Activated naive CD4-positive, alpha-beta T cell treated with anti-CD3 and anti-CD28 coated beads for 36 hours (primary cell): ENCODE measurements at regions of chr3 and their contacts with region 1.

Region 1: GRCh38 chr3:32296256-32297204 is 58.0 kb downstream of the CMTM8 start:
- DNase-seq: peak; percentile 80
- H3K4me3 Mint-ChIP-seq: peak overlapping the region; percentile 45
- H3K27ac Mint-ChIP-seq: peak overlapping the region; percentile 85
- H3K4me1 Mint-ChIP-seq: peaks cover 24% of the 10 kb centered on the region
- H3K27me3 Mint-ChIP-seq: no peaks in the 10 kb centered on the region

Region 2: GRCh38 chr3:32097768-32098167 is 198.8 kb before region 1 on chr3:
- CTCF ChIA-PET with region 1: no interaction called
- intact Hi-C with region 1: no loop called
- DNase-seq: no peak
- H3K4me3 Mint-ChIP-seq: no peak overlapping the region
- H3K27ac Mint-ChIP-seq: no peak overlapping the region
- H3K4me1 Mint-ChIP-seq: no peaks in the 10 kb centered on the region
- H3K27me3 Mint-ChIP-seq: no peaks in the 10 kb centered on the region

Region 3: GRCh38 chr3:32285891-32286290 is 10.6 kb before region 1 on chr3:
- CTCF ChIA-PET with region 1: interaction called, 11 read pairs
- intact Hi-C with region 1: no loop called
- DNase-seq: peak; percentile 20
- H3K4me3 Mint-ChIP-seq: peak overlapping the region; percentile 11
- H3K27ac Mint-ChIP-seq: peak overlapping the region; percentile 38
- H3K4me1 Mint-ChIP-seq: peaks cover 40% of the 10 kb centered on the region
- H3K27me3 Mint-ChIP-seq: no peaks in the 10 kb centered on the region

Region 4: GRCh38 chr3:32325957-32326356 is 29.4 kb after region 1 on chr3:
- CTCF ChIA-PET with region 1: interaction called, 12 read pairs
- intact Hi-C with region 1: no loop called
- DNase-seq: no peak
- H3K4me3 Mint-ChIP-seq: no peak overlapping the region
- H3K27ac Mint-ChIP-seq: no peak overlapping the region
- H3K4me1 Mint-ChIP-seq: peaks cover 9% of the 10 kb centered on the region
- H3K27me3 Mint-ChIP-seq: no peaks in the 10 kb centered on the region

Region 5: GRCh38 chr3:32401556-32402081 is 105.1 kb after region 1 on chr3:
- CTCF ChIA-PET with region 1: interaction called, 3 read pairs
- intact Hi-C with region 1: loop called (anchors 1 kb)
- DNase-seq: peak; percentile 77
- H3K4me3 Mint-ChIP-seq: peak overlapping the region; percentile 92
- H3K27ac Mint-ChIP-seq: peak overlapping the region; percentile 99
- H3K4me1 Mint-ChIP-seq: peaks cover 74% of the 10 kb centered on the region
- H3K27me3 Mint-ChIP-seq: no peaks in the 10 kb centered on the region

Region 6: DNA sequence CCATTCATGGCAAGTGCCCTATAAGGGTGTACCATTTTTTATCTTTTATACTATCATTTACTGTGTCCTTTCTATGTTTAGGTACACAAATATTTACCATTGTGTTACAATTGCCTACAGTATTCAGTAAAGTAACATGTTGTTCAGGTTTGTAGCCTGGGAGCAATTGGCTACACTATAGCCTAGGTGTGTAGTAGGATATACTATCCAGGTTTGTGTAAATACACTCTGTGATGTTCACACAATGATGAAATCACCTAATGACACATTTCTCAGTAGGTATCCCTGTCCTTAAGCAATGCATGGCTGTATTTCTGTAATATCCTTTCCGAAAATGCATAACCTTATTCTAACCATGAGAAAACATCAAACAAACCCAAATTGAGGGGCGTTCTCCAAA is 370.6 kb after region 1 on chr3:
- CTCF ChIA-PET with region 1: no interaction called
- intact Hi-C with region 1: loop called (anchors 1 kb)
- DNase-seq: no peak
- H3K4me3 Mint-ChIP-seq: no peak overlapping the region
- H3K27ac Mint-ChIP-seq: no peak overlapping the region
- H3K4me1 Mint-ChIP-seq: no peaks in the 10 kb centered on the region
- H3K27me3 Mint-ChIP-seq: no peaks in the 10 kb centered on the region